IMR-90 (cell line): ENCODE measurements at regions of chr5 and their contacts with region 1.

Region 1: GRCh38 chr5:132612846-132613245 is 45.1 kb upstream of the IL13 start:
- DNase-seq: no peak
- ATAC-seq: no peak
- H3K4me3 ChIP-seq: no peak overlapping the region
- H3K27ac ChIP-seq: no peak overlapping the region
- H3K4me1 ChIP-seq: no peaks in the 10 kb centered on the region
- H3K27me3 ChIP-seq: no peaks in the 10 kb centered on the region
- CTCF ChIP-seq: no peak
- POLR2A ChIP-seq: no peak
- RAD21 ChIP-seq: no peak

Region 2: GRCh38 chr5:132566657-132567056 is 46.2 kb before region 1 on chr5:
- CTCF ChIA-PET with region 1: no interaction called
- POLR2A ChIA-PET with region 1: no interaction called
- dilution Hi-C with region 1: no loop called
- in situ Hi-C with region 1: no loop called
- intact Hi-C with region 1: loop called (anchors 5 kb)
- DNase-seq: no peak
- ATAC-seq: no peak
- H3K4me3 ChIP-seq: no peak overlapping the region
- H3K27ac ChIP-seq: no peak overlapping the region
- H3K4me1 ChIP-seq: no peaks in the 10 kb centered on the region; the same call in 1 of the 2 replicates
- H3K27me3 ChIP-seq: no peaks in the 10 kb centered on the region
- CTCF ChIP-seq: no peak
- POLR2A ChIP-seq: no peak
- RAD21 ChIP-seq: no peak